ENCODE measurements at regions of chr17 and their contacts with region 1.

Region 1: DNA sequence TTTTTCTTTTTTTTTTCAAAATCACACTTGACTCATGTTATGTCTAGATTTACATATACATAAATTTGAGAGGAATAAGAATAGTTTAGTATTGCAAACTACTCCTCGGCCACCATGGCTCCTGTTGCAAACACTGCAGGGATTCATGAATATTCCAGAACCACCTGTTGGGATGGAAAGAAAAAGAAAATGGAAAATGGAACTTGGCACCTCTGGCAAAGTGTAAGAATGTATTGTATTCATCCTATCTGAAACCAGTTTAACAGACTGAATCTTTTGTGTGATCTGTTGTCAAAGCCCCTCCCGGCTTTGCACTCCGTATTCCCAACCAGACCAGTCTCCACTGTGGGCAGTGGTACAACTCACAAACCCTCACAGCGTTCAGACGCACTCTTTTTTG is 124.4 kb downstream of the SPECC1 start:
- DNase-seq: no peak
- ATAC-seq: no peak
- H3K4me3 ChIP-seq: no peak overlapping the region
- H3K27ac ChIP-seq: no peak overlapping the region
- H3K4me1 ChIP-seq: peaks cover 4% of the 10 kb centered on the region
- H3K27me3 ChIP-seq: no peaks in the 10 kb centered on the region
- CTCF ChIP-seq: no peak
- POLR2A ChIP-seq: no peak
- RAD21 ChIP-seq: no peak

Region 2: DNA sequence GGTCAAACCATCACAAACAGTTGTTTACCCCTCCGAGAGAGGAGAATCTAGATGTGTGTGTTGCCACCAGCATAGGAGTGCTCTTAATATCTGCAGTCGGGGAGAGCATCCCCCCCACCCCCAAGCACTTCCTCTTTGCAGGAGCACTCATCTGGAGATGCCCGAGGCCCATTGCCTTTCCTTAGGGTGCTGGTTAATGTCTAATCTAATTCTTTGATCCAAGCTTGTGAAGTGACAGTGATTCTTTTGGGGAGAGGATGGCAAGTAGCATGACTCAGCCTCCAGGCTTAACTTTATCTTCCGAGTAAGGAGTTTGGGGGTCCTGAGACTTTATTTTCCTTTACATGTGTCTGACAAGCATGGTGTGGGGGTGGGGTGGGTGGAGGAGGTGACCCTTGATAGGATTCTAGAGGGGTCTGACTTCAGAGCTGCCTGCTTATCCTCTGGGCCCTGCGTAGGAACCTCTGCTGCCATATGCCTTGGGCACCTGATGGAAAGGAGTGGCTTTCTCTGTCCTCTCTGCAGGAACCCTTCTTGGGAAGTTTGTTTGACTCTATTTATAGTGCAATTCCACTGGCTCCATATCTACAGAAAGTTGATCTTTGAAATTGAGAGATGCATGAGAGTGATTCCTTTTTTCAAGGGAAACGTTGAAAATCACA is 82.8 kb after region 1 on chr17:
- CTCF ChIA-PET with region 1: no interaction called
- POLR2A ChIA-PET with region 1: no interaction called
- dilution Hi-C with region 1: no loop called
- in situ Hi-C with region 1: loop called (anchors 5 kb)
- intact Hi-C with region 1: no loop called
- DNase-seq: no peak
- ATAC-seq: no peak
- H3K4me3 ChIP-seq: no peak overlapping the region
- H3K27ac ChIP-seq: no peak overlapping the region
- H3K4me1 ChIP-seq: no peaks in the 10 kb centered on the region
- H3K27me3 ChIP-seq: no peaks in the 10 kb centered on the region
- CTCF ChIP-seq: no peak
- POLR2A ChIP-seq: no peak
- RAD21 ChIP-seq: no peak

Measured in IMR-90 (cell line).